ENCODE measurements at regions of chr14 and their contacts with region 1.

Region 1: GRCh38 chr14:21068521-21069387 is 1.4 kb upstream of the ARHGEF40 start:
- DNase-seq: peak; percentile 73
- H3K4me3 ChIP-seq: peak overlapping the region; percentile 68
- H3K27ac ChIP-seq: peak overlapping the region; percentile 90
- H3K4me1 ChIP-seq: peaks cover 14% of the 10 kb centered on the region
- H3K27me3 ChIP-seq: no peaks in the 10 kb centered on the region
- CTCF ChIP-seq: peak; percentile 44

Region 2: GRCh38 chr14:21092273-21093011 is 23.7 kb after region 1 on chr14:
- intact Hi-C with region 1: loop called (anchors 2 kb)
- DNase-seq: peak; percentile 90
- H3K4me3 ChIP-seq: no peak overlapping the region
- H3K27ac ChIP-seq: no peak overlapping the region
- H3K4me1 ChIP-seq: peaks cover 4% of the 10 kb centered on the region
- H3K27me3 ChIP-seq: no peaks in the 10 kb centered on the region
- CTCF ChIP-seq: peak; percentile 100

Region 3: GRCh38 chr14:21104448-21105060 is 35.8 kb after region 1 on chr14:
- intact Hi-C with region 1: loop called (anchors 5 kb)
- DNase-seq: peak; percentile 85
- H3K4me3 ChIP-seq: peak overlapping the region; percentile 62
- H3K27ac ChIP-seq: peak overlapping the region; percentile 99
- H3K4me1 ChIP-seq: peaks cover 15% of the 10 kb centered on the region
- H3K27me3 ChIP-seq: no peaks in the 10 kb centered on the region
- CTCF ChIP-seq: peak; percentile 89

Region 4: GRCh38 chr14:21334202-21334899 is 265.6 kb after region 1 on chr14:
- intact Hi-C with region 1: no loop called
- DNase-seq: no peak
- H3K4me3 ChIP-seq: no peak overlapping the region
- H3K27ac ChIP-seq: no peak overlapping the region
- H3K4me1 ChIP-seq: no peaks in the 10 kb centered on the region
- H3K27me3 ChIP-seq: no peaks in the 10 kb centered on the region
- CTCF ChIP-seq: no peak